MCF 10A (cell line): ENCODE measurements at regions of chr11 and their contacts with region 1.

Region 1: DNA sequence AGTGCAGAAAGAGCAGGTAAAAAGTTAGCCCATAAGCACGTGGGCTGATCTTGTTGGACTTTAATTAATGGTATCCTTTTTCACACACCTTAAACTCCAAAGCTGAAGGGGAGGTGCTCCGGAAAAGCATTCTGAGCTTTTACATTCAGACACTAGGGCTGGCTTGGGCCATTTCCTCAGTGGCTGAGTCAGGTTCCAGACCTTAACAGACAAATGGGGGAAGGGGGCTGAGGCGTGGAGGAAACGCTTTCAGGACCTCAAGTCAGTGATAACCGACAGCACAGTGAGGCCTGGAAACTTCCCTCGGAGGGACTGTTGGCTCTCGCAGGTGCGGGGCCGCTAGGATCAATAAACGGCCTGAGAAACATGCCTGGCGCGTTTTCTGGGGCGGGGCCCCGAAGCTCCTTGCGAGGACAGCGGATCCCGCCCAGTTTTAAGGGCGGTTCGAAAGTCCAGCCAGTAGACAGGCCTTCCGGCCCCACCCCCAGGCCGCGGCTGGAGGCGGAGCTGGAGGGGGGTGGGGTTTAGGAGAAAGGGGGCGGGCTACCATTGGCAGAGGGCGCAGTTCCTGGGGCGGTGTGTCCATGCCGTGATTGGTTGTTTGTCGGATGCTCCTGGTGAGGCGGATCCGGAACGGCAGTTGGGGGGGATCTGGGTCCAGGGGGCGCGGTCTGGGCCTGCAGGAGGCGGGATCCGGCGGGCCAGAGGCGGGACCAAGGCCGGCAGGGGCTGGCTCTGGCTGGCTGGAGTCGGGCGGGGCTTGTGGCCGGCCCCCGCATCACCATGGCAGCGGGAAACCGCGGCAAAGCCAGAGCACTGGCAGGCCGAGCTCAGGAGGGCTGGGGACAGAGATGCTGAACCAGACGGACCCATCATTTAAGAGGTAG is 8.0 kb downstream of the C11orf52 start:
- DNase-seq: peak; percentile 95
- H3K4me3 Mint-ChIP-seq: peak overlapping the region; percentile 73
- H3K27ac Mint-ChIP-seq: peak overlapping the region; percentile 66
- H3K4me1 Mint-ChIP-seq: peaks cover 22% of the 10 kb centered on the region
- H3K27me3 Mint-ChIP-seq: no peaks in the 10 kb centered on the region
- CTCF ChIP-seq: no peak

Region 2: DNA sequence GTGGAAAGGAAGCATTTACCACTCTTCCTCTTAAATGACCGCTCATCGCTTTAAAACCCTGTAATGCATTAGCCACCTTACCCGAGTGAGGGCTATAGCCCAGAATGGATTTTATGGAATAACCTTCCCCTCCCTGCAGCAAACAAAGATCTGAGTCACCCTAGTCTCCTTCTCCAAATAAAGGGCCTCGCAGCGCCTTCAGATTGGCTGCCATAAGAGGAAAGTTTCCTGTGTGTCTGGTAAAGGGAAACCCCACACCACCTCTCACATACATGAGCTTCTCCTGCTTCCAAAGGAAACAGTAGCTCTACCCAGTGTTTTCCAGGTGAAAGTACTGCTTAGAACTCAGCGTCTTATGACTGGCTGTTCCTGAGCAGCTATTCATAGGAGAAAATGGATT is 208.3 kb before region 1 on chr11:
- CTCF ChIA-PET with region 1: no interaction called
- POLR2A ChIA-PET with region 1: no interaction called
- intact Hi-C with region 1: no loop called
- DNase-seq: peak; percentile 81
- H3K4me3 Mint-ChIP-seq: no peak overlapping the region
- H3K27ac Mint-ChIP-seq: peak overlapping the region; percentile 89
- H3K4me1 Mint-ChIP-seq: peaks cover 26% of the 10 kb centered on the region
- H3K27me3 Mint-ChIP-seq: no peaks in the 10 kb centered on the region
- CTCF ChIP-seq: no peak

Region 3: GRCh38 chr11:111761036-111761435 is 165.7 kb before region 1 on chr11:
- CTCF ChIA-PET with region 1: no interaction called
- POLR2A ChIA-PET with region 1: no interaction called
- intact Hi-C with region 1: no loop called
- DNase-seq: no peak
- H3K4me3 Mint-ChIP-seq: no peak overlapping the region
- H3K27ac Mint-ChIP-seq: no peak overlapping the region
- H3K4me1 Mint-ChIP-seq: peaks cover 18% of the 10 kb centered on the region
- H3K27me3 Mint-ChIP-seq: no peaks in the 10 kb centered on the region
- CTCF ChIP-seq: no peak

Region 4: GRCh38 chr11:111814557-111815320 is 112.0 kb before region 1 on chr11:
- CTCF ChIA-PET with region 1: no interaction called
- POLR2A ChIA-PET with region 1: no interaction called
- intact Hi-C with region 1: no loop called
- DNase-seq: no peak
- H3K4me3 Mint-ChIP-seq: no peak overlapping the region
- H3K27ac Mint-ChIP-seq: peak overlapping the region; percentile 28
- H3K4me1 Mint-ChIP-seq: no peaks in the 10 kb centered on the region
- H3K27me3 Mint-ChIP-seq: no peaks in the 10 kb centered on the region
- CTCF ChIP-seq: no peak

Region 5: DNA sequence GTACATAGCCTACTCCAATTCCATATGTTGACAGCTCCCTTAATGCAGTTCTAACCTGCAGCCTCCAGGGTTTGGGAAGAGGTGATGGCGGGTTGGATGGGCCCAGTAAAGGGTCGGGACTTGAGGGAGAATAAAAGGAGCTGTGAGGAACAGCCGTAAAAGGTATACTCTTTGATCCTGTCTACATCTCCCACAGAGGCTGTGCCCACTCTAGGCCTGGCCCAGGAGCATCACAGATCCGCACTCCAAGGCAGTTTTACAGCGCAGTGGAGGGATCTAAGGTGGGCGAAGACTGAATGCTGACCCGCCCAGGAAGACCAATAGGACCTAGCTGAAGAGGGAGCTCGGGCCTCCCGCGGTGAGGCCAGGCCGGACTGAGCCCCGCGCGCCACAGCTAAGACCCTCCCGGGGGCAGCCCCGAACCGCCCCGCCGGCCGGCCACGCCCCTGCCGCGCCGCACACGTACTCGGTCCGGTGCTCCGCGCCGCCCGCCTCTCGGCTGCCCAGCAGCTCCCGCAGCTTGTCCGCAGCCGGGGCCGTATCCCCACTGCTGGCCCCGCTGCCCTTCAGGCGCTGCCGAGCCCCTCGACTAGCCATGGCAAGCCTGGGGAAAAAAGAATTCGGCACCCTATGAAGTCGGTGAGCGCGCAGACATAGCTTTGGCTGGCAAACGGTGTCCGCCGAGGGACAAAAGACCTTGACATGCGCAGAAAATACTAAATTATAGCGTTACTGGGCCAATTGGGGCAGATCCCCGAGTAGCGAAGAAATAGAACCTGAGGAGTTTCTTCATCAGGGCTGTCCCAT is 55.7 kb before region 1 on chr11 and contains the start of gene ALG9:
- CTCF ChIA-PET with region 1: interaction called, 18 read pairs
- POLR2A ChIA-PET with region 1: interaction called, 27 read pairs
- intact Hi-C with region 1: no loop called
- DNase-seq: peak; percentile 82
- H3K4me3 Mint-ChIP-seq: peak within 1 kb of the TSS; percentile 96
- H3K27ac Mint-ChIP-seq: peak within 1 kb of the TSS; percentile 57
- H3K4me1 Mint-ChIP-seq: peaks cover 12% of the 10 kb centered on the region
- H3K27me3 Mint-ChIP-seq: no peaks in the 10 kb centered on the region
- CTCF ChIP-seq: peak; percentile 44
- total RNA-seq, gene ALG9: 28.8 and 31.2 TPM in 2 replicates

Region 6: GRCh38 chr11:111911563-111912401 is 15.0 kb before region 1 on chr11 and contains the start of gene CRYAB:
- CTCF ChIA-PET with region 1: interaction called, 12 read pairs
- POLR2A ChIA-PET with region 1: interaction called, 21 read pairs
- intact Hi-C with region 1: no loop called
- DNase-seq: peak; percentile 61
- H3K4me3 Mint-ChIP-seq: peak within 1 kb of the TSS; percentile 41
- H3K27ac Mint-ChIP-seq: peak within 1 kb of the TSS; percentile 86
- H3K4me1 Mint-ChIP-seq: peaks cover 18% of the 10 kb centered on the region
- H3K27me3 Mint-ChIP-seq: no peaks in the 10 kb centered on the region
- CTCF ChIP-seq: no peak
- total RNA-seq, gene CRYAB: 1.2 and 2.5 TPM in 2 replicates

Region 7: DNA sequence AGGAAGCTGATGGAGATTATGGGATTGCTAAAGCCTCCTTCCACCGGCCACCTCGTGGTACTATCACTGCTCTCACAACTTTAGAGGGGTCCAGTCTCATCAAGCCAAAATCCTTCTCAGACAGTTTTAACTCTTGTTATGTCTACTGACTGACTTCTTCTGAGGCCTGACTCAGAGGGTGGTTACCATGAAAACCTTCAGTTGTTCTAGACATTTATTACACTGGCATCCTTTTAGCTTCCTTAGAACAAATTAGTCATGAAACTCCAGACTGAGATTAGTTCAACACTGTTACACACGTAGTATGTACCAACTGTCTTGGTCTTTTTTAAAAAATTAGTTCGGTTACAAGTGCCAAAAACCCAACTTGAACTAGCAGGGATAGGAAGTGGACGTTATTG is 17.9 kb after region 1 on chr11:
- CTCF ChIA-PET with region 1: interaction called, 33 read pairs
- POLR2A ChIA-PET with region 1: interaction called, 28 read pairs
- intact Hi-C with region 1: no loop called
- DNase-seq: peak; percentile 76
- H3K4me3 Mint-ChIP-seq: peak overlapping the region; percentile 6
- H3K27ac Mint-ChIP-seq: peak overlapping the region; percentile 98
- H3K4me1 Mint-ChIP-seq: peaks cover 53% of the 10 kb centered on the region
- H3K27me3 Mint-ChIP-seq: no peaks in the 10 kb centered on the region
- CTCF ChIP-seq: no peak

Region 8: DNA sequence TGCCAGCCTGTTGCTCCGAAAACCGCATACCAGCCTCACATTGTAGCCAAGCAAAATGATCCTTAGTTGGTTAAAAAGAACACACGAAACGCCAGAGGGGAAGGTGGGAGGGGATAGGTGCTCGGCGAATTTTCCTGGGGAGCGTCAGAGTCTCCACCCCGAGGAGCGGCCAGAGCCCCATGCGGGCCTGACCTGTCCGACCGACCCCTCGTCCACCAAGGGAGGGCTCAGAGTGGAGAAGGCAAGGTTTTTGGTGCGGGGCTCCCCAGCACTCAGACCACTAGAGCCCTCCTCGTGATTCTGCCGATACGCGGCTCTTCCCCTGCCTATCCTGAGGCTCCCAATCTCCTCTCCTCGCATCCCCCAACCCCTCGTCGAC is 50.0 kb after region 1 on chr11:
- CTCF ChIA-PET with region 1: interaction called, 564 read pairs
- POLR2A ChIA-PET with region 1: interaction called, 513 read pairs
- intact Hi-C with region 1: loop called (anchors 1 kb)
- DNase-seq: peak; percentile 77
- H3K4me3 Mint-ChIP-seq: peak overlapping the region; percentile 81
- H3K27ac Mint-ChIP-seq: peak overlapping the region; percentile 97
- H3K4me1 Mint-ChIP-seq: peaks cover 31% of the 10 kb centered on the region
- H3K27me3 Mint-ChIP-seq: no peaks in the 10 kb centered on the region
- CTCF ChIP-seq: no peak

Region 9: DNA sequence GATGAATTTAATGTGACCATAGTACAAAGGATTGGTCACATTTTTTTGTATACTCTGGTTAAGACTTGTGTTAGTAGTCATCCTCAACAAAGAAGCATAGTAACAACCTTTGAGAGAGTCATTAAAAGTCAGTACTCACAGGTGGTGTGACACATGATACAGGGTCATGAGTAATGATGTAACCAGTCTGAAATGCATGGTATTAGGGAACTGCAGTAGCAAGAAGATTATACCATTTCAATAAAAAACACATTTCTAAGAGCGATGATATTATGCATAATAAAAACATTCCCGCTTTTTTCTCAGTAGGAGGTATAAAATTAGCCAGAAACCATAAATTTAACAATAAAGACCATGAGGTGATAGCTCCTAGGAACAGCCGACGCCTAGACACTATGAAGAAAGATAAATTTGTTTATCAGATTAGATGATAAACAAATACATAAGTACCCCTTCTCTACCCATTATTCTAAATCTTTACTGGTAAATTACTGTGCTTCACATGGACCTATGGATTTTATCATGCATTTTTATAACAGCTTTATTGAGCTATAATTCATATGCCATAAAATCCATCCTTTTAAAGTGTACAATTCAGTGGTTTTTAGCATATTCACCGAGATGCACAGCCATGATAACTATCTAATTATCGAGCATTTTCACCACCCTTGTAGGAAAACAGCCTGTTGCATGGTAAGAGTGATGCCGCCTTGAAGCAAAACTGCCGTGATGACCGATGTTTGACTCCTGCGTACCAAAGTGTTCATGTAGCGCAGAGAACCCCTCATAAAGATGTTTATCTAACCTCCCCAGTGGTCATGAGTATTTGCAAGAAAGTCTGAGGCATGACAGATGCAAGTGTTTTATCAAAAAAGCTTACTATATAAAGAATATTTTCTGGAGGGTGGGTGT is 1737.6 kb after region 1 on chr11:
- CTCF ChIA-PET with region 1: no interaction called
- POLR2A ChIA-PET with region 1: no interaction called
- intact Hi-C with region 1: no loop called
- DNase-seq: no peak
- H3K4me3 Mint-ChIP-seq: no peak overlapping the region
- H3K27ac Mint-ChIP-seq: peak overlapping the region; percentile 52
- H3K4me1 Mint-ChIP-seq: peaks cover 12% of the 10 kb centered on the region
- H3K27me3 Mint-ChIP-seq: no peaks in the 10 kb centered on the region
- CTCF ChIP-seq: no peak